GM10248 (cell line): ENCODE measurements at regions of chr11 and their contacts with region 1.

Region 1: GRCh38 chr11:66112601-66113098 is 42.6 kb downstream of the PACS1 start:
- DNase-seq: no peak
- CTCF ChIP-seq: no peak

Region 2: DNA sequence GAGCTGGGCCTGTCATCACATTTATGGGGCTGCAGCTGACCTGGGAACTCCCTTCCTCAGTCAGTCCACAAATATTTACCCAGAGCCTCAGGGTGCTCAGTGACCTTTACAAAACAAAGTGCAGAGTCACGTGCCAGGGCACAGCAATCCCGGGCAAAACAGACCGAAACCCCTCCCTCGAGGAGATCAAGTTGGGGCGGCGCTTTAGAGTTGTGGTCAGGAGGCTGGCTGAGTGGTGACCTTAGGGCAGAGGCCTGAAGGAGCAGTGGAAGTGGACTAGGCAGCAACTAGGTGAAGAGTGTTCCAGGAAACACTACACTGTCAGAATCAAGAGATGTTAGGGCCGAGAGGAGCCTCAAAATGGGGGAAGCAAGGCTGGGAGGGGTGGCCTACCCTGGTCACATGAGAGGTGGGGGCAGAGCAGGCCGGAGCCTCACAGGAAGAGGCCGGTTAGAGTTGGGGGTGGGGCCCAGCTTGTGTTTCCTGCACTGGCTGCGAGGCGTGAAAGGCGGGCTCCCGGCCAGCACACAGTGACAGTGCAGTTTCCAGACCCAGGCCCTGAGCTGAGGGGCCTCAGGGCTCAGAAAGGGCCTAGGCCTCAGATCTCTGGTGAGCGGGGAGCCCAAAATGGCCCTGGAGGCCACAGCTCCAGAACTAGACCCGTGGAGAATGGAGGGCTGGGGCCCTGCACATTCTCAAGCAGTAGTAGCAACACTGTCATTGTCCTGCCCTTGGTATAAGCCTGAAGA is 693.8 kb before region 1 on chr11:
- CTCF ChIA-PET with region 1: no interaction called
- POLR2A ChIA-PET with region 1: no interaction called
- DNase-seq: peak; percentile 88
- CTCF ChIP-seq: no peak

Region 3: GRCh38 chr11:66015936-66016792 is 96.5 kb before region 1 on chr11:
- CTCF ChIA-PET with region 1: no interaction called
- POLR2A ChIA-PET with region 1: no interaction called
- DNase-seq: no peak
- CTCF ChIP-seq: no peak

Region 4: DNA sequence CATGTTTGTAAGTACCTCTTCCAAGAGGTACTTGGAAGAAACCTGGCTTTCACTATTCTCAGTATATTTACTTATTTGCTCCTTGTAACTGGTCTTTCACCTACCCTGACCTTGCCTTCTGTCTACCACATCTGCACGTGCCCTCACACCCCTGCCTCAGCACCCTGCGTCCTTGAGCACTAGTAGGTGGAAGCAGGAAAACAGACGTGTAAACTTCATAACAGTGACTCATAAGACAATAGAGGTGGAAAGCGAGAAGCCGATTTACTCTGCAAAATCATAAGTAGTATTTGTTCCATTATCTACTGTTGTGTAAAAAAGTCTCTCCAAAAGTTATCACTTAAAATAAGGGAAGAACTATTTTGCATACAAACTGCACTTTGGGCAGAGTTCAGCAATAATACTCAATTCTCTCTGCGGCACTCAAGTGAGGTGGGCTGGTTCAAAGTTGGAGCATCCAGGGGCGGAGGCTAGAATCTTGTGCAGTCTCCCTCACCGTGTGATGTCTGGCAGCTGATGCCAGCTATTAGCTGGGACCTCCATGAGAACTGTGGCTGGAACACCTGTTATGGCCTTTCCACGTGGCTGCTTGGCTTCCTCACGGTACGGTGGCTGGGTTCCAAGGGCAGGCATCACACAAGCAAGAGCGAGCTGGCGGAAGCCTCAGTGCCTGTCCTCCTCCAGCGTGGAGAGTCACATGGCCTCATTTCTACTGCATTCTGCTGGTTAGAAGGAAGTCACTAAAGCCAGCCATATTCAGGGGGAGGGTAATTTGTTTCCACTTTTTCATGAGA is 12.2 kb before region 1 on chr11:
- CTCF ChIA-PET with region 1: interaction called, 10 read pairs
- POLR2A ChIA-PET with region 1: no interaction called
- DNase-seq: peak; percentile 62
- CTCF ChIP-seq: no peak

Region 5: GRCh38 chr11:66126808-66127555 is 14.3 kb after region 1 on chr11:
- CTCF ChIA-PET with region 1: interaction called, 64 read pairs
- POLR2A ChIA-PET with region 1: interaction called, 3 read pairs
- DNase-seq: peak; percentile 41
- CTCF ChIP-seq: no peak